A549 (cell line): ENCODE measurements at regions of chr5 and their contacts with region 1.

Region 1: GRCh38 chr5:170638454-170639220 is 134.8 kb downstream of the KCNIP1 start:
- DNase-seq: peak; percentile 51 to 82
- ATAC-seq: peak; percentile 83 to 95
- H3K4me3 ChIP-seq: no peak overlapping the region
- H3K27ac ChIP-seq: no peak overlapping the region
- H3K4me1 ChIP-seq: peaks cover 6% of the 10 kb centered on the region
- CTCF ChIP-seq: peak; percentile 87
- EP300 ChIP-seq: no peak
- POLR2A ChIP-seq: no peak
- RAD21 ChIP-seq: peak; percentile 88 to 91

Region 2: GRCh38 chr5:170655476-170655875 is 16.8 kb after region 1 on chr5:
- CTCF ChIA-PET with region 1: interaction called, 19 read pairs
- POLR2A ChIA-PET with region 1: no interaction called
- DNase-seq: no peak
- ATAC-seq: no peak
- H3K4me3 ChIP-seq: no peak overlapping the region
- H3K27ac ChIP-seq: no peak overlapping the region
- H3K4me1 ChIP-seq: no peaks in the 10 kb centered on the region
- CTCF ChIP-seq: no peak
- EP300 ChIP-seq: no peak
- POLR2A ChIP-seq: no peak
- RAD21 ChIP-seq: no peak

Region 3: DNA sequence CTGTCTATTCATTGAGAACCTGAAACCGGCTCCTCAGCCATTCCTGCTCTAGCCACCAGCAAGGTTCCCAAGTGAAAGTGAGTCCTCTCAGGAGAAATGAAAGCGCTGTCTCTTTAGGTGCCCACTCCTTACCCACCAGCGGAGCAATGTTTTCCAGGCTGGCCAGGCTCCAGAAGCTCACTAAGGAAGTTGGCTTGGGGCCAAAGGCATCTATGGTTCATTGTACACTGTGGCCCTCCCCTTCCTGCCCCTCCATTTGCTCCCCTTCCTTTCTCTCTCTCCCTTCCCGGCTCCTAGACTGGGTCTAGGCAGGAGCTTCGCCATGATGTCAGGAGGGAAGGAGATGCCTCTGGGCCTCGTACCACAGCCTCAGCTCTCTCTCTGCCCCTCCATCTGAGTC is 143.8 kb after region 1 on chr5:
- CTCF ChIA-PET with region 1: interaction called, 97 read pairs
- POLR2A ChIA-PET with region 1: no interaction called
- DNase-seq: no peak
- ATAC-seq: no peak
- H3K4me3 ChIP-seq: no peak overlapping the region
- H3K27ac ChIP-seq: no peak overlapping the region
- H3K4me1 ChIP-seq: no peaks in the 10 kb centered on the region
- CTCF ChIP-seq: no peak
- EP300 ChIP-seq: no peak
- POLR2A ChIP-seq: no peak
- RAD21 ChIP-seq: no peak

Region 4: GRCh38 chr5:170791325-170791954 is 152.8 kb after region 1 on chr5:
- CTCF ChIA-PET with region 1: interaction called, 97 read pairs
- POLR2A ChIA-PET with region 1: interaction called, 3 read pairs
- DNase-seq: peak; percentile 53 to 66
- ATAC-seq: peak; percentile 87 to 95
- H3K4me3 ChIP-seq: no peak overlapping the region
- H3K27ac ChIP-seq: no peak overlapping the region
- H3K4me1 ChIP-seq: no peaks in the 10 kb centered on the region
- CTCF ChIP-seq: peak; percentile 73
- EP300 ChIP-seq: no peak
- POLR2A ChIP-seq: no peak
- RAD21 ChIP-seq: peak; percentile 84 to 85